Activated T-helper 2 cell treated with anti-CD3 and anti-CD28 coated beads, Interferon-gamma antibody, Interleukin-2, Interleukin-4, amounts not matched to agents 10 μg/mL and 5 μg/mL and 100 μg/mL, durations not matched to agents 14 hours and 24 hours and 36 hours (primary cell): ENCODE measurements at regions of chr17 and their contacts with region 1.

Region 1: GRCh38 chr17:44968226-44969143 is at the start of gene C1QL1:
- DNase-seq: peak; percentile 83
- H3K4me3 Mint-ChIP-seq: peak within 1 kb of the TSS; percentile 77
- H3K27ac Mint-ChIP-seq: no peak within 1 kb of the TSS
- H3K4me1 Mint-ChIP-seq: peaks cover 30% of the 10 kb centered on the region
- H3K27me3 Mint-ChIP-seq: peaks cover 59% of the 10 kb centered on the region
- total RNA-seq, gene C1QL1: 0.41 and 0.48 TPM in 2 replicates

Region 2: DNA sequence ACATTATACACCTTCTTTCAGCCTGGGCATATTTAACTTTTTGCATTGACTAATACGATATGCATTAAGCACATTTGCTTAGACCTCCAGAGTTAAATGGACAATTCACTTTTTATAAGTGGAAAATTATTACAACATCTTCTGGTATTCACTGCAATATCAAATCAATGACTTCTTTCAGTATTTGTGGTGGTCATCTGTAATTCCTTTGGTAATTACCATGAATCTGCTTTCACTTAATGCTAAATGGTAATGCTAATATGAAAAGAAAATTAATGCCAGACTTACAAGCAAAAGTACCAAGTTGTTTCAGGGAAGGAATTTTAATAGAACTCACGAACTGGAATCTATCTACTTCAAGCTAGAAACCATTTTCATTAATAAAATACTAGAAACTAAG is 471.7 kb before region 1 on chr17:
- intact Hi-C with region 1: no loop called
- DNase-seq: no peak
- H3K4me3 Mint-ChIP-seq: no peak overlapping the region
- H3K27ac Mint-ChIP-seq: no peak overlapping the region
- H3K4me1 Mint-ChIP-seq: peaks cover 21% of the 10 kb centered on the region
- H3K27me3 Mint-ChIP-seq: no peaks in the 10 kb centered on the region

Region 3: GRCh38 chr17:44926821-44927525 is 41.5 kb before region 1 on chr17:
- intact Hi-C with region 1: no loop called
- DNase-seq: no peak
- H3K4me3 Mint-ChIP-seq: no peak overlapping the region
- H3K27ac Mint-ChIP-seq: no peak overlapping the region
- H3K4me1 Mint-ChIP-seq: no peaks in the 10 kb centered on the region
- H3K27me3 Mint-ChIP-seq: peaks cover 4% of the 10 kb centered on the region

Region 4: GRCh38 chr17:44947461-44948314 is 20.8 kb before region 1 on chr17 and contains the start of gene KIF18B:
- intact Hi-C with region 1: loop called (anchors 2 kb)
- DNase-seq: peak; percentile 91
- H3K4me3 Mint-ChIP-seq: peak within 1 kb of the TSS; percentile 93
- H3K27ac Mint-ChIP-seq: peak within 1 kb of the TSS; percentile 78
- H3K4me1 Mint-ChIP-seq: peaks cover 32% of the 10 kb centered on the region
- H3K27me3 Mint-ChIP-seq: no peaks in the 10 kb centered on the region
- total RNA-seq, gene KIF18B: 46.7 and 47.1 TPM in 2 replicates